CD8-positive, alpha-beta T cell (primary cell): ENCODE measurements at regions of chr17 and their contacts with region 1.

Region 1: DNA sequence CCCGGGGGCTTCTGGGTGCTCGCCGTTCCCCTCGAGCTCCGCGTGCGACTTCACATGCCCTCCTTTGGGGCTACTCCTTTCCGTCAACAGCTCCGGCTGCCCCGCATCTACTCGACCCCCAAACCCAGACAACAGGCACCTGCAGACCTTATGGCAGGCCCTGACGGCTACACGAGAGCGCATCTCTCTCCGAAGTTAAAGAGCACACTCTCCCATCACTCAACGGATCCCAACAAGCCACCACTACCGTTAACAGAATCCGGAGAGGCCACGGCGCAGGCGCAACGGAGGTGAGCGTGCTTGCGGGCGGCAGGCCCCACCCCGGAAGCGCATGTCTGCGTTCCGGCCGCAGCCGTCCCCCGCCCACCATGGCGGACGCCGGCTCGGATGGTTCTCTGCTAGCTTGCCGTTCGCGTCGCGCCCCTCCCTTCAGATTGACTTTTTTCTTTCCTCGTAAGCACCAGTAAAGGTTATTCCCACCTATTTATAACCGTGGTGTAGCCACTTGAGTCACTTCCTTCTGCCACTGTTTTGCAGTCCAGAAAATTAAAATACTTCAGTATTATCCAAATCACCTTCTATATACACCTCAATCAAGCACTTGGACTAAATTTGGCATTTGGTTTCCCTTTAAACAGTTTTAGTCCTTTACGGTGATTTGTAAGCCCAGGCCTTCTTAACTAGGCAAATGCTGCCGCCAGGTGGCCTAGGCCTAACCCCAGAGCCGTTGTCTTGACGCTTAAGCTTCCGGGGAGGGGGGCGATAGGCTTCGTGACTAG is at the start of gene POLG2:
- DNase-seq: peak; percentile 88 to 98 (median 96)
- ATAC-seq: peak; percentile 78
- H3K4me3 ChIP-seq: peak within 1 kb of the TSS; percentile 84 to 85
- H3K4me3 Mint-ChIP-seq: peak within 1 kb of the TSS; percentile 99
- H3K27ac ChIP-seq: peak within 1 kb of the TSS; percentile 65 to 82
- H3K27ac Mint-ChIP-seq: peak within 1 kb of the TSS; percentile 98
- H3K4me1 ChIP-seq: peaks cover 40% of the 10 kb centered on the region
- H3K4me1 Mint-ChIP-seq: peaks cover 83% of the 10 kb centered on the region
- H3K27me3 ChIP-seq: no peaks in the 10 kb centered on the region
- H3K27me3 Mint-ChIP-seq: no peaks in the 10 kb centered on the region
- CTCF ChIP-seq: peak; percentile 54
- total RNA-seq, gene POLG2: 28.1 to 32.7 TPM

Region 2: DNA sequence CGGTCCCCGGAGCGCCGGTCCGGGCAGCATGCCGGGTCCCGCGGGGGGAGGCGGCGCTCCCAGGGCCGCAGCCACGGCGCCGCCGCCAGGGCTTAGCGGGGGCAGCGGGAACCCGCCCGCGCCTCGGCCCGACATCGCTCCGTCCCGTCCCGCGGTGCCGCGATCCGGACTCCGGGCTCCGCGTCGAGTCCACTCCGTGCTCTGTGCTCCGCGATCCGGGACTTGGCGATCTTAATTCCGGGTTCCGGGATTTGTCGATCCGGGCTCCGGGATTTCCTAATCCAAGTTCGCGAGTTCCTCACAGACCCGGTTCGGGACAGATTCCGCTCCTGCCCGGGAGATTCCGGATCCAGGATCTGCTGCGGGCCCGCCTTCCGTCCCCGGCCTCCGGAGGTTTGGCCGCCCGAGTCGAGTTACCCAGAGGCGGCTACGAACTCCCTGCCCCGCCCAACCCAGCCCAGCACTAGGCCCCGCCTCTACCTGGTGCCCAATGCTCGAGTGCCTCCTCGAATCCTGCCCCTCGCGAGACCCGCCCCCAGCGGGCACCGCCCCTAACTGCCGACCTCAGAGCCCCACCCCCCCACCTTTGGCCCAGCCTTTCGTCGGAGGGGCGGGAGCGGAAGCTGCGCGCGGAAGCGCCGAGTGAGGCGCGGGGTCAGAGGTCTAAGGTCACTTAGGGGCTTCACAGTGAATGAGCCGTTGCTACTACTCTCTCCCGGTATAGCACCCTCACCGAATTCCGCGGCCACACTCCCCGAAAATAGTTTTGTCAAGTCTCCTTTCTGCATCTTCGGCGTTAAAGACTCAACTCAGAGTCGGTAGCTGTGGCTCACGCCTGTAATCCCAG is 654.2 kb before region 1 on chr17 and contains the start of gene SMARCD2:
- CTCF ChIA-PET with region 1: no interaction called
- POLR2A ChIA-PET with region 1: no interaction called
- intact Hi-C with region 1: loop called in 1 of 2 experiments (anchors 2 kb)
- DNase-seq: peak; percentile 99
- ATAC-seq: peak; percentile 91
- H3K4me3 ChIP-seq: peak within 1 kb of the TSS; percentile 86 to 95
- H3K4me3 Mint-ChIP-seq: peak within 1 kb of the TSS; percentile 92
- H3K27ac ChIP-seq: peak within 1 kb of the TSS; percentile 88 to 95
- H3K27ac Mint-ChIP-seq: peak within 1 kb of the TSS; percentile 92
- H3K4me1 ChIP-seq: peaks cover 43% of the 10 kb centered on the region
- H3K4me1 Mint-ChIP-seq: peaks cover 30% of the 10 kb centered on the region
- H3K27me3 ChIP-seq: no peaks in the 10 kb centered on the region
- H3K27me3 Mint-ChIP-seq: no peaks in the 10 kb centered on the region
- CTCF ChIP-seq: no peak
- total RNA-seq, gene SMARCD2: 121 TPM

Region 3: GRCh38 chr17:64320613-64321553 is 176.1 kb before region 1 on chr17:
- CTCF ChIA-PET with region 1: interaction called, 5 read pairs
- POLR2A ChIA-PET with region 1: no interaction called
- intact Hi-C with region 1: loop called in 1 of 2 experiments (anchors 10 kb)
- DNase-seq: peak in 8 of 9 experiments; percentile 38 to 76 (median 59)
- ATAC-seq: peak; percentile 68
- H3K4me3 ChIP-seq: no peak overlapping the region
- H3K4me3 Mint-ChIP-seq: peak overlapping the region; percentile 39
- H3K27ac ChIP-seq: peak overlapping the region in 1 of 2 experiments; percentile 33
- H3K27ac Mint-ChIP-seq: peak overlapping the region; percentile 88
- H3K4me1 ChIP-seq: no peaks in the 10 kb centered on the region
- H3K4me1 Mint-ChIP-seq: peaks cover 38% of the 10 kb centered on the region
- H3K27me3 ChIP-seq: no peaks in the 10 kb centered on the region
- H3K27me3 Mint-ChIP-seq: no peaks in the 10 kb centered on the region
- CTCF ChIP-seq: peak; percentile 84

Region 4: GRCh38 chr17:64648234-64648633 is 151.3 kb after region 1 on chr17:
- CTCF ChIA-PET with region 1: interaction called, 10 read pairs
- POLR2A ChIA-PET with region 1: no interaction called
- intact Hi-C with region 1: no loop called
- DNase-seq: no peak
- ATAC-seq: no peak
- H3K4me3 ChIP-seq: no peak overlapping the region
- H3K4me3 Mint-ChIP-seq: no peak overlapping the region
- H3K27ac ChIP-seq: no peak overlapping the region
- H3K27ac Mint-ChIP-seq: no peak overlapping the region
- H3K4me1 ChIP-seq: peaks cover 7% of the 10 kb centered on the region
- H3K4me1 Mint-ChIP-seq: peaks cover 51% of the 10 kb centered on the region
- H3K27me3 ChIP-seq: no peaks in the 10 kb centered on the region
- H3K27me3 Mint-ChIP-seq: no peaks in the 10 kb centered on the region
- CTCF ChIP-seq: no peak

Region 5: GRCh38 chr17:64661976-64662773 is 165.2 kb after region 1 on chr17 and contains the start of gene SMURF2:
- CTCF ChIA-PET with region 1: no interaction called
- POLR2A ChIA-PET with region 1: no interaction called
- intact Hi-C with region 1: loop called in 1 of 2 experiments (anchors 1 kb)
- DNase-seq: peak; percentile 63 to 90 (median 80)
- ATAC-seq: peak; percentile 90
- H3K4me3 ChIP-seq: peak within 1 kb of the TSS; percentile 71 to 79
- H3K4me3 Mint-ChIP-seq: peak within 1 kb of the TSS; percentile 98
- H3K27ac ChIP-seq: peak within 1 kb of the TSS; percentile 56 to 63
- H3K27ac Mint-ChIP-seq: peak within 1 kb of the TSS; percentile 95
- H3K4me1 ChIP-seq: peaks cover 31% of the 10 kb centered on the region
- H3K4me1 Mint-ChIP-seq: peaks cover 44% of the 10 kb centered on the region
- H3K27me3 ChIP-seq: no peaks in the 10 kb centered on the region
- H3K27me3 Mint-ChIP-seq: no peaks in the 10 kb centered on the region
- CTCF ChIP-seq: no peak
- total RNA-seq, gene SMURF2: 27.3 to 28.1 TPM

Region 6: DNA sequence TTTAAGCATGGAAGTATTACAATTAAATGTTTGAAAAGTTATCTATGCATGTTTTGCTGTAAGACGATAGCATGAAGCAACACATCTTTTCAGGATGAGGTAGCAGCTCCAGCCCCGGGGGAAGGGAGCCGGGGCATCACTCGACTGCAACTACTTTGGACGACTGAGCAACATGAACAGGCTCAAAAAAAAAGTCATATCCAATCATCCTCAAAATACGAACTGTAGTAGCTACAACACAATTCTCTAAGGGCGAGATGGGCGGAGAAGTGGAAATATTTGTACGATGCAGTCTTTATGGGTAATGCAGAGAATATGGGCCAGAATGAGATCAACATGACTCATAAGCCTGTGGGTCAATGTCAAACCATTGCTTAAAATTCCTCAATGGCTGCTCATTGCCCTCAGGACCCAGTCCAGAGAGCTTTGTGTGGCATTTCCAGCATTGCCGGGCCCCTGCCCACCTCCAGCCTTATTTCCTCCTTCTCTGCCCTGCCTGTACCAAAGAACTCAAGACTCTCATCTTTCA is 182.8 kb after region 1 on chr17:
- CTCF ChIA-PET with region 1: no interaction called
- POLR2A ChIA-PET with region 1: no interaction called
- intact Hi-C with region 1: no loop called
- DNase-seq: no peak
- ATAC-seq: no peak
- H3K4me3 ChIP-seq: no peak overlapping the region
- H3K4me3 Mint-ChIP-seq: no peak overlapping the region
- H3K27ac ChIP-seq: no peak overlapping the region
- H3K27ac Mint-ChIP-seq: no peak overlapping the region
- H3K4me1 ChIP-seq: no peaks in the 10 kb centered on the region
- H3K4me1 Mint-ChIP-seq: no peaks in the 10 kb centered on the region
- H3K27me3 ChIP-seq: no peaks in the 10 kb centered on the region
- H3K27me3 Mint-ChIP-seq: no peaks in the 10 kb centered on the region
- CTCF ChIP-seq: no peak

Region 7: GRCh38 chr17:65047942-65048341 is 551.0 kb after region 1 on chr17:
- CTCF ChIA-PET with region 1: no interaction called
- POLR2A ChIA-PET with region 1: no interaction called
- intact Hi-C with region 1: loop called in 1 of 2 experiments (anchors 10 kb)
- DNase-seq: peak in 1 of 9 experiments; percentile 50
- ATAC-seq: no peak
- H3K4me3 ChIP-seq: no peak overlapping the region
- H3K4me3 Mint-ChIP-seq: no peak overlapping the region
- H3K27ac ChIP-seq: peak overlapping the region in 1 of 2 experiments; percentile 53
- H3K27ac Mint-ChIP-seq: peak overlapping the region; percentile 68
- H3K4me1 ChIP-seq: peaks cover 41% of the 10 kb centered on the region
- H3K4me1 Mint-ChIP-seq: peaks cover 82% of the 10 kb centered on the region
- H3K27me3 ChIP-seq: no peaks in the 10 kb centered on the region
- H3K27me3 Mint-ChIP-seq: no peaks in the 10 kb centered on the region
- CTCF ChIP-seq: no peak